CD8-positive, alpha-beta T cell (primary cell): ENCODE measurements at regions of chr6 and their contacts with region 1.

Region 1: DNA sequence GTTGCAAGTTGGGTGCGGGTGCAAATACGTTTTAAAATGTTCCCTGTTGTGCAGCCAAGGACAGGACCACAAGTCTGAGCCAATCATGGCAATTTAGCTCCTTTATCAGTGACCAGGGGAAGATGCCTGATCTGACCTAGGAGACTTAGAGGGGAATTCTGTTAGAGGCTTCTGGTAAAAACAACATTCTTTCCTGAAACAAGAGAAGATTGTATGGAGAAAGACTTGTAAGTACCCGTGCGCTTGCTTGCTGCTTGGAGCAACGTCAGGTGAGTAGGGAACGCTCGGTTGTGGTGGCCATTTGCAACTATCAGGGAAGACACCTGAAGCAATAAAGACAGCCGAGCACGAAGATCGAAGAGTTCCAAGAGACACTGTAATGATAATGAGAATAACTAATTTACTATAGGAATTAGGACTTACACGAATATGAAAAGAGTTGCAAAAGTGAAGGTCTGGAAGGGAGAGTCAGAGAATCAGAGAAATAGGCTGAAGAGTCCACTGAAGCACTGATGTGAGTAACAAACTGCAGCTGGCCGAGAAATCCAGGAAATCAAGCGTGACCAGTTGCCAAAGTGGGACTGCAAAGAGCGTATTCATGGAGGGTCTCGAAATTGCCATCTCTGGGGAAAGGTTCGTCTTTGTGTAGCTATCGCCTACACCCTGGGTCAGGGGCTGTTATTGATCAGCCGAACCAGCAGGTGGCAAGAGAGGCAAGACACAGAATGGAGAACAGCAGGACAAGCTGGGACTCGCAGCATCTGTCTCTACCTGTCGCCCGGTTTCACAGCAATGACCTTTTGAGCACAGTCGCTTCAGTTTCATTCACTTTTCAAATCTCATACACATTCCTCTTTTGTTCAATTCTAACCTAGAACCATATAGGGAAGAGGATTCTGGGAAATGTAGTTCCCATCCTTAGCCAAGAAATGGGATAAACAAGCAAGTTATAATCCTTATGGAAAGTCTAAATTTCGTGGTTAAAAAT is 26.1 kb downstream of the LOC128125822 start:
- DNase-seq: peak; percentile 52 to 86 (median 73)
- ATAC-seq: peak; percentile 99
- H3K4me3 ChIP-seq: peak overlapping the region; percentile 52 to 55
- H3K4me3 Mint-ChIP-seq: peak overlapping the region; percentile 84
- H3K27ac ChIP-seq: no peak overlapping the region
- H3K27ac Mint-ChIP-seq: no peak overlapping the region
- H3K4me1 ChIP-seq: no peaks in the 10 kb centered on the region
- H3K4me1 Mint-ChIP-seq: peaks cover 12% of the 10 kb centered on the region
- H3K27me3 ChIP-seq: peaks cover 0 to 5% of the 10 kb centered on the region in 2 experiments
- H3K27me3 Mint-ChIP-seq: peaks cover 8% of the 10 kb centered on the region
- CTCF ChIP-seq: peak; percentile 89

Region 2: DNA sequence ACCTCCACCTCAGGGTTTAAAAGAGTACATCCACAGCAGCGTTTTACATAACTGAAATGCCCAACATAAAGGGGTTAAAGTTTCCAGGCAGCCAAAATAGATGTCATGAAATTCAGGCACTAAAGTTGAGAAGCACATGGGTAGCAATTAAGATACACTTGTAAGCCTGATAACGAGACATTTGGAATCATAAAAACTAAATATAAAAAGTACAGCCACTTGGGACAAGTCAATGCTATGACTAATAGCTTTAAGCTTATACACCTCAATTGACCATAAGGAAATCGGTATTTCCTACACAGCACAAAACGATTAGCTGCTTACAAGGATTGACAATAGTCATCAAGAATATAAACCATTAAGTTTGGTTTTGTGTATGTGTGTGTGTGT is 14.2 kb before region 1 on chr6:
- CTCF ChIA-PET with region 1: interaction called, 13 read pairs
- POLR2A ChIA-PET with region 1: no interaction called
- intact Hi-C with region 1: no loop called
- DNase-seq: no peak
- ATAC-seq: no peak
- H3K4me3 ChIP-seq: no peak overlapping the region
- H3K4me3 Mint-ChIP-seq: no peak overlapping the region
- H3K27ac ChIP-seq: no peak overlapping the region
- H3K27ac Mint-ChIP-seq: no peak overlapping the region
- H3K4me1 ChIP-seq: no peaks in the 10 kb centered on the region
- H3K4me1 Mint-ChIP-seq: no peaks in the 10 kb centered on the region
- H3K27me3 ChIP-seq: no peaks in the 10 kb centered on the region
- H3K27me3 Mint-ChIP-seq: peaks cover 3% of the 10 kb centered on the region
- CTCF ChIP-seq: no peak

Region 3: GRCh38 chr6:63635588-63636517 is 37.5 kb after region 1 on chr6 and contains the start of gene PHF3:
- CTCF ChIA-PET with region 1: interaction called, 6 read pairs
- POLR2A ChIA-PET with region 1: interaction called, 5 read pairs
- intact Hi-C with region 1: loop called (anchors 1 to 5 kb)
- DNase-seq: peak; percentile 81 to 98 (median 90)
- ATAC-seq: peak; percentile 91
- H3K4me3 ChIP-seq: peak within 1 kb of the TSS; percentile 85 to 97
- H3K4me3 Mint-ChIP-seq: peak within 1 kb of the TSS; percentile 98
- H3K27ac ChIP-seq: peak within 1 kb of the TSS; percentile 94 to 96
- H3K27ac Mint-ChIP-seq: peak within 1 kb of the TSS; percentile 98
- H3K4me1 ChIP-seq: peaks cover 35% of the 10 kb centered on the region
- H3K4me1 Mint-ChIP-seq: peaks cover 53% of the 10 kb centered on the region
- H3K27me3 ChIP-seq: no peaks in the 10 kb centered on the region
- H3K27me3 Mint-ChIP-seq: no peaks in the 10 kb centered on the region
- CTCF ChIP-seq: no peak
- total RNA-seq, gene PHF3: 123 to 126 TPM

Region 4: DNA sequence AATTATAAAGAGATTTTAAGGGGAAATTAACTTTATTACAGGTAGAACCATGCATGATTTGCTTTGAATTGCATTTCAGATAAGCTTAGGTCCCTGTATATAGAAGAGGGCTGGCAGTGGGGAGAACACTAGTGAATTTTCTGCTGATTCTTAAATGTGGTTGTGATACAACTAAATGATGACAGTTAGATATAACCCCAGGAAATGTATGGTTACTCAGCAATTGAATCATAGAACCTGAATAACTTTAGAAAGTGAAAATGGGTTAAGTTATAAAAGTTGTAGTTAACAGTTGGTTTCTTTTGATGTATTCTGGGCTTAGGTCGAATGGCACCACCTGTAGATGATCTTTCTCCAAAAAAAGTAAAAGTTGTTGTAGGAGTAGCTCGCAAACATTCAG is 107.4 kb after region 1 on chr6:
- CTCF ChIA-PET with region 1: interaction called, 15 read pairs
- POLR2A ChIA-PET with region 1: no interaction called
- intact Hi-C with region 1: no loop called
- DNase-seq: no peak
- ATAC-seq: no peak
- H3K4me3 ChIP-seq: no peak overlapping the region
- H3K4me3 Mint-ChIP-seq: no peak overlapping the region
- H3K27ac ChIP-seq: no peak overlapping the region
- H3K27ac Mint-ChIP-seq: peak overlapping the region; percentile 10
- H3K4me1 ChIP-seq: no peaks in the 10 kb centered on the region
- H3K4me1 Mint-ChIP-seq: peaks cover 4% of the 10 kb centered on the region
- H3K27me3 ChIP-seq: no peaks in the 10 kb centered on the region
- H3K27me3 Mint-ChIP-seq: no peaks in the 10 kb centered on the region
- CTCF ChIP-seq: no peak

Region 5: DNA sequence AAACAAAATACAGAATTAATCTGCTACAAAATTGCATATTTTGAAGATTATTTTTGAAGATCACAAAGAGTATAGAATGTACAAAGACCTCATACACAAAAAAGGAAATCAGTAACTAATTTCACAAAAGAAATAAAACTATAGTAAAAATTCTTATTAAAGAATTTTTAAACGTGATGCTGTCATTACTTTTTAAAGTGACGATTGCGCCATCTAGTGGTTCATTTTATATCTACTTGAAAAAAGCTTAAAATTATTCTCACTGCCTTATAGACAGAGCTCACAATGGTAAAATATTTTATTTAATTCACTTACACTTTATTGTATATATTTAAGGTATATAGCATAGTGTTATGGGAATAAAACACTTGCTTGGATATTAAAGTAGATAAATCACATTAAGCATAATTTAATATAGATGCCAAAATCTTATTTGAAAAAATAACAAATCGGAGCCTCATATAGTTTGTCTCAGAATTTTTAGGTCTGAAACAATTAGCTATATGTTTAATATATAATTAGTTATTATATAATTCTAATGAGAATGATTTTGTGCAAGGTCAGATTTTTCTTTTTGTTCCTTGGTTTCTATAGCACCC is 166.1 kb after region 1 on chr6:
- CTCF ChIA-PET with region 1: interaction called, 139 read pairs
- POLR2A ChIA-PET with region 1: interaction called, 7 read pairs
- intact Hi-C with region 1: loop called (anchors 1 kb)
- DNase-seq: peak in 3 of 9 experiments; percentile 4 to 68 (median 59)
- ATAC-seq: no peak
- H3K4me3 ChIP-seq: no peak overlapping the region
- H3K4me3 Mint-ChIP-seq: no peak overlapping the region
- H3K27ac ChIP-seq: no peak overlapping the region
- H3K27ac Mint-ChIP-seq: no peak overlapping the region
- H3K4me1 ChIP-seq: no peaks in the 10 kb centered on the region
- H3K4me1 Mint-ChIP-seq: no peaks in the 10 kb centered on the region
- H3K27me3 ChIP-seq: no peaks in the 10 kb centered on the region
- H3K27me3 Mint-ChIP-seq: peaks cover 7% of the 10 kb centered on the region
- CTCF ChIP-seq: peak; percentile 77

Region 6: DNA sequence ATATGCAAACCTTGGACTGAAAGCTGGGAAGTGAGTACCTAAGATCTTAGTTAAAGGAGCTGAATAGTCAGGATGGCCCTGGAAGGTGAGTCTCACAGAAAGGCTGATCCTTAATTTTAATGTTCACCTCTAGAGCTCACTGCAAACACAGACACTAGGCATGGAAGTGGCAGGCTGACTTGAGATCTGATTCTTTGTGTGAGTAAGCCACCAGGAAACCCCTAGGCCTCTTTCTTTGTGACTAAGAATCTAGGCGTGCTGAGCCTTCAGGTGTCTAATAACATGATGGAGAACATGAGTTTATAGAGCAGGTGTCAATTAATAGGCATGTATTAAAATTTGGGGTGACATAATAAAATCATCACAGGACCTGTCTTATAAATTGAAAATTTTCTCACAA is 1466.5 kb after region 1 on chr6:
- CTCF ChIA-PET with region 1: no interaction called
- POLR2A ChIA-PET with region 1: no interaction called
- intact Hi-C with region 1: no loop called
- DNase-seq: no peak
- ATAC-seq: no peak
- H3K4me3 ChIP-seq: no peak overlapping the region
- H3K4me3 Mint-ChIP-seq: no peak overlapping the region
- H3K27ac ChIP-seq: no peak overlapping the region
- H3K27ac Mint-ChIP-seq: no peak overlapping the region
- H3K4me1 ChIP-seq: no peaks in the 10 kb centered on the region
- H3K4me1 Mint-ChIP-seq: no peaks in the 10 kb centered on the region
- H3K27me3 ChIP-seq: no peaks in the 10 kb centered on the region
- H3K27me3 Mint-ChIP-seq: no peaks in the 10 kb centered on the region
- CTCF ChIP-seq: no peak